SK-N-SH (cell line): ENCODE measurements at regions of chr17 and their contacts with region 1.

Region 1: GRCh38 chr17:42997984-42998938 is at the start of gene RPL27:
- DNase-seq: peak; percentile 88
- H3K4me3 ChIP-seq: peak within 1 kb of the TSS; percentile 85 to 87
- H3K27ac ChIP-seq: peak within 1 kb of the TSS; percentile 87 to 90
- H3K4me1 ChIP-seq: peaks cover 6 to 11% of the 10 kb centered on the region in 2 experiments; a peak in 2 of 4 replicates
- H3K27me3 ChIP-seq: no peaks in the 10 kb centered on the region
- CTCF ChIP-seq: peak; percentile 77
- EP300 ChIP-seq: peak; percentile 54 to 57; a peak in 2 of 4 replicates
- RAD21 ChIP-seq: peak; percentile 70
- polyA plus RNA-seq, gene RPL27: 4,890 and 6,383 TPM in 2 replicates

Region 2: DNA sequence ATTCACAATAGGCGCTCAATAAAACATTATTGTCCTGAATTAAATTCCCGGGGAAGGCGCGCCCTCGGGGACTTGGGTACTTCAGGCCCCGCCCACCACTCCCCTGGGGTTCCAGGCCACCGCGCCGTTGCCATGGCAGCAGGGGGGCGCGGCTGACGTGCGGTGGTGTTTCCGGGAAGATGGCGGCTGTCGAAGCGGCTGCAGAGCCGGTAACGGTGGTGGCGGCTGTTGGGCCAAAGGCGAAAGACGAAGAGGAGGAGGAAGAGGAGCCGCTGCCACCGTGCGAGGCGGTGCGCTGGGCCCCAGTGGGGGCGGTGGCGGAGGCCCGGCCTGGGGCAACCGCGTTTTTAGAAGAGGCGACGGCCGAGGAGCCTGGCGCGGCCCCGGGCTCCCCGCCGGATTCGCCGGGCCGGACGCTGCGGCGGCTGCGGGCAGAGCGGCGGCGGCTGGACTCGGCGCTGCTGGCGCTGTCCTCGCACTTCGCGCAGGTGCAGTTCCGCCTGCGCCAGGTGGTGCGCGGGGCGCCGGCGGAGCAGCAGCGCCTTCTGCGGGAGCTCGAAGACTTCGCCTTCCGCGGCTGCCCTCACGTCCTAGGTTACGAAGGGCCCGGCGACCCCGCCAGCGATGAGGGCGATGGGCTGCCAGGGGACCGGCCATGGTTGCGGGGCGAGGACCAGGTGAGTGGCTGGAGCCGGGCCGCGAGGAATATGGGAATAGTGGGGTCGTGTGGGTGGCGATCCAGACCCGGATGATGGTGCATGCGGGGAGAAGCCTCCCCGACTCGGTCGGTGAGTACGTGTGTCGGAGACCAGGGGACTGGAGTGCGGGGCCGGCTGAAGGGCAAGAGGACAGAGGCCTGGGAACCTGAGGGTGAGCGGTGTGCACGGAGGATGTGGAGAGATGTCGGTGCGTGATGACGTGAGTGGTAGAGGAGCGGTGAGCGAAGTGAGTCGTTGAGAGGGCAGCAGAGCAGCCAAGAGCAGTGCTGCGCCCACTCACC is 17.6 kb before region 1 on chr17 and contains the start of gene RUNDC1:
- CTCF ChIA-PET with region 1: interaction called, 27 read pairs
- POLR2A ChIA-PET with region 1: interaction called, 11 read pairs
- DNase-seq: peak; percentile 98
- H3K4me3 ChIP-seq: peak within 1 kb of the TSS; percentile 71 to 97
- H3K27ac ChIP-seq: peak within 1 kb of the TSS; percentile 69 to 87
- H3K4me1 ChIP-seq: peaks cover 10 to 12% of the 10 kb centered on the region in 2 experiments; a peak in 2 of 4 replicates
- H3K27me3 ChIP-seq: no peaks in the 10 kb centered on the region
- CTCF ChIP-seq: no peak
- EP300 ChIP-seq: no peak
- RAD21 ChIP-seq: 0 out of 2 replicates have a peak, but pooled peaks have one; percentile 13
- polyA plus RNA-seq, gene RUNDC1: 9.0 and 9.5 TPM in 2 replicates

Region 3: GRCh38 chr17:43010667-43011308 is 12.5 kb after region 1 on chr17:
- CTCF ChIA-PET with region 1: interaction called, 7 read pairs
- POLR2A ChIA-PET with region 1: interaction called, 17 read pairs
- DNase-seq: no peak
- H3K4me3 ChIP-seq: no peak overlapping the region
- H3K27ac ChIP-seq: no peak overlapping the region
- H3K4me1 ChIP-seq: no peaks in the 10 kb centered on the region; a peak in 1 of 4 replicates
- H3K27me3 ChIP-seq: no peaks in the 10 kb centered on the region
- CTCF ChIP-seq: no peak
- EP300 ChIP-seq: no peak
- RAD21 ChIP-seq: no peak

Region 4: DNA sequence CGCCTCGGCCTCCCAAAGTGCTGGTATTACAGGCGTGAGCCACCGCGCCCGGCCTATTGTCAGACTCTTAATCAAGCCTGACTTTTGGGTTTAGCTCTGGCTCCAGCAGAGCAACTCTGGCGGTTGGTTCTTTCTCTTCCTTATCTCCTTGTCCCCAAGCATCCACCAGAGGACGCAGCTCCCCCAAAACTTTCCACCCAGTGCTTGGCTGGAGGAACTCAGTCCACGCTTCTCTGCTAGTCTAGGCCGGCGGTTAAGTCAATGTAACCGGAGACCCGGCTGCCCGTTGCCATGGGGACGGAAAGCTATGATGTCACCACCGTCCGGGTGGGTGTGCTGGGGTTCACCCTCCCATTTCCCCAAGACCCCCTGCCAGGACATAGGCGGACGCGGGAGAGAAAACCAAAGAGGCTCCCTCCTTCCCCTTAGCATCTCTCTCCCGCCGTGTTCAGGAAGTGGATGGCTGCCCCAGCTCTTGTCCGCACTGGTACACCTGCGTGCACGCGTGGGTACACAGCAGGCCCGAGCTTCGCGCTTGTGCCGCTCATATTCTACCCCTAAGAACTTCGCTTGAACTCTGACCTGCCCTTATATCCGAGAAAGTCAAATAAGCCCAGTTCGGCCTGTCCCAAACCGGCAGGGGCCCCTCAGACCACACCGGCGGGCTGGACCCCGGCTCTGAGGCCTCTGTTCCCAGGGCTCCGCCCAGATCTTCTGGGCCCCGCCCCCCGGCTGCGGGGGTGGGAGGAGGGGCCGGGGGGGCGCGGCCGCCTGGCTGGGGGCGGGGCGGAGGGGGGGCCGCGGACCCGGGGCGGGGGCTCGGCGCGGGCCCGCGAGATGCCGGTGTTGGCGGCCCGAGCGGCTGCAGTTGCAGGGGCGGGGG is 26.4 kb after region 1 on chr17 and contains the start of gene RND2:
- CTCF ChIA-PET with region 1: interaction called, 17 read pairs
- POLR2A ChIA-PET with region 1: interaction called, 20 read pairs
- DNase-seq: peak; percentile 98
- H3K4me3 ChIP-seq: peak within 1 kb of the TSS; percentile 63 to 81
- H3K27ac ChIP-seq: peak within 1 kb of the TSS; percentile 68 to 86
- H3K4me1 ChIP-seq: peaks cover 0 to 13% of the 10 kb centered on the region in 2 experiments; a peak in 1 of 4 replicates
- H3K27me3 ChIP-seq: no peaks in the 10 kb centered on the region
- CTCF ChIP-seq: peak; percentile 81
- EP300 ChIP-seq: no peak
- RAD21 ChIP-seq: peak; percentile 85
- polyA plus RNA-seq, gene RND2: 8.9 and 10.5 TPM in 2 replicates